SK-N-SH (cell line): ENCODE measurements at regions of chr11 and their contacts with region 1.

Region 1: DNA sequence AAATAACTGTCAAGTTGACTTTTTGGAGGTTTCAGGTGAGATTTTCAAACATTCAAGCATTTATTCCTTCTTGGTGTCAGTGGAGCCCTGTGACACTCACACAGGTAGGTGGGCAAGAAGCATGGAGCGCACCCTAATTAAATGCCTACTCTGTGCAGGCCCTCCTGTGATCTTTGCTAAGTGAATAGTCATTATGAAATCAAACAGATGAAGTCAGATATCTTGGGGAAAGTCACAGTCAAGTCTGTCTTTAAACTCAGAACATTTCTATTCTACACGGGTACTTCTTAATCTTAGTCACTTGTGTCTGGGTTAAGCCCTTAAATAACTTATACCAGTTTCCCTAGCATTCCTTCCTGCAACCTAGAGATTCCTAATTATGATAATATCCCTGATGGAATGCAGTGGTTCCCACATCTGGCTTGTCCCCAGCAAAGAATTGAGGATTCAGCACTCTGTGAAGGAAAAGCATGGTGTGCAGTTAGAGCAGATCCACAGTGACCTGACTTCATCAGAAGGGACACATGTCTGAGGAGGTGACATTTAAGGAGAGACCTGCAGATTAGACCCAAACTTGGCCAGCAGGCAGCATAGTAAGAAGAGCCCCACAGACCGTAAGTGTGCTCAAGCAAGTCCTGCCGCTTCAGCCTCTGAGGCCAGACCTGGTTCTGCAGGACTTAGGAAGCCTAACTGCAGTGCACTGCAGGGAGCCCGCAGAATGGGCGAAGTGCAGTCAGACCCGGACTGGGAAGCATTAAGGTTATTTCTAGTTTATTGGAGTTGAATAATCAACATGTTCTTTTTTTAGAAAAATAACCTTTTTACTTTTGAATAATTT is 85.3 kb upstream of the GAL start:
- DNase-seq: no peak
- H3K4me3 ChIP-seq: no peak overlapping the region
- H3K27ac ChIP-seq: no peak overlapping the region
- H3K4me1 ChIP-seq: peaks cover 0 to 9% of the 10 kb centered on the region in 2 experiments; a peak in 2 of 4 replicates
- H3K27me3 ChIP-seq: no peaks in the 10 kb centered on the region
- CTCF ChIP-seq: no peak
- EP300 ChIP-seq: no peak
- RAD21 ChIP-seq: no peak

Region 2: GRCh38 chr11:68584097-68584496 is 14.9 kb before region 1 on chr11:
- CTCF ChIA-PET with region 1: interaction called, 12 read pairs
- POLR2A ChIA-PET with region 1: no interaction called
- DNase-seq: peak; percentile 55
- H3K4me3 ChIP-seq: no peak overlapping the region
- H3K27ac ChIP-seq: no peak overlapping the region
- H3K4me1 ChIP-seq: peaks cover 2 to 14% of the 10 kb centered on the region in 2 experiments; a peak in 2 of 4 replicates
- H3K27me3 ChIP-seq: no peaks in the 10 kb centered on the region
- CTCF ChIP-seq: peak; percentile 67
- EP300 ChIP-seq: no peak
- RAD21 ChIP-seq: peak; percentile 57

Region 3: DNA sequence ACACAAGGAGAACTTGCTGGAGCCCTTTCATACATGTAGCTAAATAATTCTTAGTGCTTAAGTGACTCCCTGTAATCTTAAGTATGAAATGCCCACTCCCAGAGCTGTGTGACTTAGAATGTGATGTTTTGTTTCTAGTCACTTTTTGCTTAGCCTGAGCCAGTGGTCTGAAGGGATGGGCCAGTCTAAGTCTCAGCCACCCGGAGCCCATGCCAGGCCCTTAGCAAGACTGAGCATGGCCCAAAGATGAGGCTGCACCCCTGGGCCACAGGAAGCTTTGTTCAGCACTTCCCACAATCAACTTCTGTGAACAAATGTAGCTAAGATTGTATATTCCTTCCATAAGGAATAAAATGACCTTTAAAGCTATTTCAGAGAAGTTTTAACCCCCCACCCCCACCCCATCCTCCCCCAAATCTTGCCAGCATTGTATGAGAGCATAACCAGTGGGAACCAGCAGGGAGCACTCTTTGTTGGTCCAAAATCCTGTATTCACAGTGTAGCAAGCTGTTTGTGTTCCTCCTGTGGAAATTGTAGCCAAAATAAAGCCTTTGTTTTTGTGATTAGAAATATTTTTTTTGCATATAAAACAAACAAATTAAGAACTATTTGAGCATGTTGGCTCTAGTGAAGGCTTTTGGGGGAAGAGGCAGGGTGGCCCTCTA is 11.5 kb after region 1 on chr11:
- CTCF ChIA-PET with region 1: interaction called, 14 read pairs
- POLR2A ChIA-PET with region 1: no interaction called
- DNase-seq: peak; percentile 67
- H3K4me3 ChIP-seq: no peak overlapping the region
- H3K27ac ChIP-seq: peak overlapping the region in 1 of 2 experiments; percentile 11; a peak in 1 of 4 replicates
- H3K4me1 ChIP-seq: no peaks in the 10 kb centered on the region; a peak in 2 of 4 replicates
- H3K27me3 ChIP-seq: no peaks in the 10 kb centered on the region
- CTCF ChIP-seq: peak; percentile 53
- EP300 ChIP-seq: no peak
- RAD21 ChIP-seq: peak; percentile 74

Region 4: GRCh38 chr11:68621826-68622225 is 22.8 kb after region 1 on chr11:
- CTCF ChIA-PET with region 1: no interaction called
- POLR2A ChIA-PET with region 1: no interaction called
- DNase-seq: no peak
- H3K4me3 ChIP-seq: no peak overlapping the region
- H3K27ac ChIP-seq: no peak overlapping the region
- H3K4me1 ChIP-seq: no peaks in the 10 kb centered on the region
- H3K27me3 ChIP-seq: no peaks in the 10 kb centered on the region
- CTCF ChIP-seq: no peak
- EP300 ChIP-seq: no peak
- RAD21 ChIP-seq: no peak